ENCODE measurements at regions of chr17 and their contacts with region 1.

Region 1: DNA sequence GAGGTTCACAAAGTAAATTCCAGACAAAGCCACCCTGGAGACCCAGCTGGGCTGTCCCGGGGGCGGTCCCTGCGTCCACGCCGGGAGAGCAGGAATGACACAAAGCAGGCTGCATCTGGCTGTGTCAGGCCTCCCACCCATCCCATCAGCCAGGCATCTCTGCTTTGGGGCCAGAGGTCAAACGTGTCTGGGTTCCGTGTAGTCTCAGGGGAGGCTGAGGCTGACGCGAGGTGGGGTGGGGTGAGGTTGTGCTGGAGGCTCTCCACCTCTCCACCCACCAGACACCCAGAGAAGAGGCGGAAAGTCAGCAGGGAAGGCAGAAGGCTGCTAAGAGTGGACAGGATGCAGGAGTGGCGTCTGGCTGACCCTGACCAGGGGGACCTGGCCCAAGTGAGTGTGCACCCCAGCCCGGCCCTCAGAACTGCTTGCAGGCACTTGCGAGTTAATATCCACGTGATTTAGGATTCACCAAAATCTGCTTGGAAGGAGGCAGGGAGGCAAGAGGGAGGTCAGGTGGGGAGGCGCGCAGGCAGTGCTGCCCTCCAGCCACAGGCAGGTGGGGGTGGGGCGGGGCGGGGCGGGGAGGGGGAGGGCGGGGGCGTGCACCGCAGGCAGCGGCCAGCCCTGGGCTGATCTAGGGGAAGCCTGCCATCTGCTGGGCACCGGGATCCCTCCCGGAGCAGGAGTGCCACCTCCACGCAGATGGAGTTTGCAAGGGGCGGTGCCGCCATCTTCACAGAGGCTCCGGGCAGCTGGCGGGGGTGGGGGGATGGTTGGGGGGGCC is 44.3 kb downstream of the TBC1D16 start:
- DNase-seq: peak; percentile 94 to 96
- H3K4me3 ChIP-seq: peak overlapping the region; percentile 48
- H3K4me3 Mint-ChIP-seq: peak overlapping the region; percentile 96
- H3K27ac Mint-ChIP-seq: peak overlapping the region; percentile 100
- H3K4me1 ChIP-seq: peaks cover 62% of the 10 kb centered on the region
- H3K4me1 Mint-ChIP-seq: peaks cover 44% of the 10 kb centered on the region
- H3K27me3 ChIP-seq: no peaks in the 10 kb centered on the region
- H3K27me3 Mint-ChIP-seq: no peaks in the 10 kb centered on the region
- CTCF ChIP-seq: peak; percentile 67 to 79

Region 2: GRCh38 chr17:79741751-79742588 is 249.4 kb before region 1 on chr17:
- CTCF ChIA-PET with region 1: interaction called, 10 read pairs
- POLR2A ChIA-PET with region 1: no interaction called
- intact Hi-C with region 1: loop called (anchors 2 kb)
- DNase-seq: peak; percentile 91 to 98
- H3K4me3 ChIP-seq: peak overlapping the region; percentile 56
- H3K4me3 Mint-ChIP-seq: peak overlapping the region; percentile 75
- H3K27ac Mint-ChIP-seq: peak overlapping the region; percentile 45
- H3K4me1 ChIP-seq: peaks cover 60% of the 10 kb centered on the region
- H3K4me1 Mint-ChIP-seq: peaks cover 21% of the 10 kb centered on the region
- H3K27me3 ChIP-seq: no peaks in the 10 kb centered on the region
- H3K27me3 Mint-ChIP-seq: no peaks in the 10 kb centered on the region
- CTCF ChIP-seq: peak; percentile 95 to 98

Region 3: DNA sequence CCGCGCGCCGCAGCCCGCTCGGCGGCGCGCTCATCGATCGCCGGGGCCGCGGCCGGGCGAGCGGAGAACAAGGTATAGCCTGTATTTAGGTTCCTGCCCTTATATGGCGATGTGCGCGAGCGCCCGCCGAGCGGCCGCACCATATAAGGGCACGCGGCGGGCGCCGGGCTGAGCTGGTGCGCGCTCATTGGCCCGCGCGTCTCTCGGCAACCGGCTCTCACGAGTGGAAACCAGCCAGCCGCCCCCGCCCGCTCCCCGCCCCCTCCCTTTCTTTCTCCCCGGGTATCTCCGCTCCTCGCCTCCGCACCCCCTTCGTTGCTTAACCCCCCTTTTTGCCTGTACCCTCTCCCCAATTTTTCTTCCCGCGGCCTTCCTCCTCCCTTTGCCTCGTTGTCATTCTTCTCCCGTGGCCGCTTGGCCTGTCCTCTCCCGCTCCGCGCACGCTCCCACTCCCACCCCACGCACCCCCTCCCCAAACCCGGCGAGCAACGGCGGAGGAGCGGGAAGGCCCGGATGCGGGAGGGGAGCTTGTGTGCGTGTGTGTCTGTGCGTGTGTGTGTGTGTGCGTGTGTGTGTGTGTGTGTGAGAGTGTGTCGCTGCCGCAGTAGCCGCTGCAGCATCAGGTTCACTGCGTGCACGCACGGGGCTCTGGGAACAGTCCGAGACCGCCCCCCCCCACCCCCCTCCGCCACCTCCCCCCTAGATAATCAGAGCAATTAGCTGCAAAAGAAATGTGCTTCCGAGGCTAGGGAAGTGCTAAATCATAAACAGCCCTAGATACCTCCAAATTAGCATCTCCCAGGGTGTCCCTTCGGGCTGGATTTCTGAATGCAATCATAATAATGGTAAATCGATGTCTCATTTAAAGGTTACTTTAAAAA is 181.0 kb before region 1 on chr17:
- CTCF ChIA-PET with region 1: interaction called, 6 read pairs
- POLR2A ChIA-PET with region 1: interaction called, 8 read pairs
- intact Hi-C with region 1: loop called (anchors 2 kb)
- DNase-seq: peak; percentile 91
- H3K4me3 ChIP-seq: peak overlapping the region; percentile 63
- H3K4me3 Mint-ChIP-seq: peak overlapping the region; percentile 81
- H3K27ac Mint-ChIP-seq: peak overlapping the region; percentile 61
- H3K4me1 ChIP-seq: peaks cover 36% of the 10 kb centered on the region
- H3K4me1 Mint-ChIP-seq: peaks cover 6% of the 10 kb centered on the region
- H3K27me3 ChIP-seq: no peaks in the 10 kb centered on the region
- H3K27me3 Mint-ChIP-seq: no peaks in the 10 kb centered on the region
- CTCF ChIP-seq: no peak

Region 4: GRCh38 chr17:79844869-79845600 is 146.3 kb before region 1 on chr17:
- CTCF ChIA-PET with region 1: interaction called, 29 read pairs
- POLR2A ChIA-PET with region 1: interaction called, 170 read pairs
- intact Hi-C with region 1: loop called (anchors 1 kb)
- DNase-seq: peak; percentile 82 to 87
- H3K4me3 ChIP-seq: peak overlapping the region; percentile 68
- H3K4me3 Mint-ChIP-seq: peak overlapping the region; percentile 80
- H3K27ac Mint-ChIP-seq: peak overlapping the region; percentile 92
- H3K4me1 ChIP-seq: peaks cover 41% of the 10 kb centered on the region
- H3K4me1 Mint-ChIP-seq: peaks cover 12% of the 10 kb centered on the region
- H3K27me3 ChIP-seq: no peaks in the 10 kb centered on the region
- H3K27me3 Mint-ChIP-seq: no peaks in the 10 kb centered on the region
- CTCF ChIP-seq: peak; percentile 89

Region 5: GRCh38 chr17:79923974-79924638 is 67.2 kb before region 1 on chr17:
- CTCF ChIA-PET with region 1: interaction called, 6 read pairs
- POLR2A ChIA-PET with region 1: interaction called, 9 read pairs
- intact Hi-C with region 1: loop called (anchors 2 kb)
- DNase-seq: peak; percentile 75 to 78
- H3K4me3 ChIP-seq: no peak overlapping the region
- H3K4me3 Mint-ChIP-seq: no peak overlapping the region
- H3K27ac Mint-ChIP-seq: peak overlapping the region; percentile 90
- H3K4me1 ChIP-seq: peaks cover 50% of the 10 kb centered on the region
- H3K4me1 Mint-ChIP-seq: peaks cover 36% of the 10 kb centered on the region
- H3K27me3 ChIP-seq: no peaks in the 10 kb centered on the region
- H3K27me3 Mint-ChIP-seq: no peaks in the 10 kb centered on the region
- CTCF ChIP-seq: peak; percentile 47 to 71

Region 6: DNA sequence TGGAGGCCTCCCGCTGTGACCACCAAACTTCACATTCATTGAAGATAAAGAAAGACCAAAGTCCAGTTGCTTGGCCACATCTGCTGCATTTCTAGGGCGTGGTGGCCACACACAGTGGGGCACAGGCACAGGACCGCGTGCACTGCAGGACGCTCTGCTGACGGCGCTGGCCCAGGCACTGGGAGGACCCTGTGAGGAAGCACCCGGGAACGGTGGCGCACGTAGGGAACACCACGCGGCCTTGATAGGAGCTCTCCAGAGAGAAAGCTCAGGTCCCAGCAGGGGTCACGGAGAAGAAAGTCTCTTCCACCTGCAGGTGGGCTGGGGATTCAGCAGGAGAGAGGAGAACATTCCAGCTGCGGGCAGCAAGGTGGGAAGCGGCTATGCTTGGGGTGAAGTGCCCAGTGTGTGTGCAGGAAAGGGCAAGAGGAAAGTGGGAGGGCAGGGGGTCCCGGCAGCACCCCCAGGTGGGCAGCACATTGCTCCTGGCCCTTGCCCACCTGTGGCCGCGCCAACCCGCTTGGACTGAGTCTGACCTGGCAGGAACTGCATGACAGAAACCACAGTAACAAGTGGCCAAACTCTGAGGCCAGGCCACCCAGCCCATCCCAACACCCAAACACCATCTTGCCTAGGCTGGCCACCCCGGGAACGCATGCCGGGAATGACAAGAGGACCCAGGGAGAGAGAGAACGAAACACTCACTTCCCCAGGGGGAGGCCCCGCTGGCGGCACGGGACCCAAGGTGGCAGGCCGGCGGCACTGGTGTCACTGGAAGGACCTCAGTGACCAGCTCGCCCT is 11.6 kb after region 1 on chr17:
- CTCF ChIA-PET with region 1: interaction called, 13 read pairs
- POLR2A ChIA-PET with region 1: interaction called, 9 read pairs
- intact Hi-C with region 1: loop called (anchors 1 kb)
- DNase-seq: peak; percentile 69 to 85
- H3K4me3 ChIP-seq: peak overlapping the region; percentile 17; the same call in 1 of the 2 replicates
- H3K4me3 Mint-ChIP-seq: peak overlapping the region; percentile 72
- H3K27ac Mint-ChIP-seq: peak overlapping the region; percentile 97
- H3K4me1 ChIP-seq: peaks cover 25% of the 10 kb centered on the region
- H3K4me1 Mint-ChIP-seq: peaks cover 18% of the 10 kb centered on the region
- H3K27me3 ChIP-seq: no peaks in the 10 kb centered on the region
- H3K27me3 Mint-ChIP-seq: no peaks in the 10 kb centered on the region
- CTCF ChIP-seq: no peak

Region 7: GRCh38 chr17:80089762-80090161 is 98.4 kb after region 1 on chr17:
- CTCF ChIA-PET with region 1: no interaction called
- POLR2A ChIA-PET with region 1: no interaction called
- intact Hi-C with region 1: no loop called
- DNase-seq: no peak
- H3K4me3 ChIP-seq: no peak overlapping the region
- H3K4me3 Mint-ChIP-seq: no peak overlapping the region
- H3K27ac Mint-ChIP-seq: no peak overlapping the region
- H3K4me1 ChIP-seq: no peaks in the 10 kb centered on the region
- H3K4me1 Mint-ChIP-seq: no peaks in the 10 kb centered on the region
- H3K27me3 ChIP-seq: no peaks in the 10 kb centered on the region
- H3K27me3 Mint-ChIP-seq: peaks cover 3% of the 10 kb centered on the region
- CTCF ChIP-seq: no peak

Region 8: GRCh38 chr17:80101011-80101945 is 109.9 kb after region 1 on chr17 and contains the start of gene GAA:
- CTCF ChIA-PET with region 1: interaction called, 11 read pairs
- POLR2A ChIA-PET with region 1: interaction called, 16 read pairs
- intact Hi-C with region 1: no loop called
- DNase-seq: peak; percentile 80 to 95
- H3K4me3 ChIP-seq: peak within 1 kb of the TSS; percentile 97
- H3K4me3 Mint-ChIP-seq: peak within 1 kb of the TSS; percentile 86
- H3K27ac Mint-ChIP-seq: peak within 1 kb of the TSS; percentile 81
- H3K4me1 ChIP-seq: peaks cover 9% of the 10 kb centered on the region
- H3K4me1 Mint-ChIP-seq: peaks cover 6% of the 10 kb centered on the region
- H3K27me3 ChIP-seq: no peaks in the 10 kb centered on the region; the same call in 1 of the 2 replicates
- H3K27me3 Mint-ChIP-seq: no peaks in the 10 kb centered on the region
- CTCF ChIP-seq: peak; percentile 64 to 94
- total RNA-seq, gene GAA: 42.4 and 44.6 TPM in 2 replicates

Measured in Caco-2 (cell line).